ENCODE measurements at regions of chr5 and their contacts with region 1.

Region 1: DNA sequence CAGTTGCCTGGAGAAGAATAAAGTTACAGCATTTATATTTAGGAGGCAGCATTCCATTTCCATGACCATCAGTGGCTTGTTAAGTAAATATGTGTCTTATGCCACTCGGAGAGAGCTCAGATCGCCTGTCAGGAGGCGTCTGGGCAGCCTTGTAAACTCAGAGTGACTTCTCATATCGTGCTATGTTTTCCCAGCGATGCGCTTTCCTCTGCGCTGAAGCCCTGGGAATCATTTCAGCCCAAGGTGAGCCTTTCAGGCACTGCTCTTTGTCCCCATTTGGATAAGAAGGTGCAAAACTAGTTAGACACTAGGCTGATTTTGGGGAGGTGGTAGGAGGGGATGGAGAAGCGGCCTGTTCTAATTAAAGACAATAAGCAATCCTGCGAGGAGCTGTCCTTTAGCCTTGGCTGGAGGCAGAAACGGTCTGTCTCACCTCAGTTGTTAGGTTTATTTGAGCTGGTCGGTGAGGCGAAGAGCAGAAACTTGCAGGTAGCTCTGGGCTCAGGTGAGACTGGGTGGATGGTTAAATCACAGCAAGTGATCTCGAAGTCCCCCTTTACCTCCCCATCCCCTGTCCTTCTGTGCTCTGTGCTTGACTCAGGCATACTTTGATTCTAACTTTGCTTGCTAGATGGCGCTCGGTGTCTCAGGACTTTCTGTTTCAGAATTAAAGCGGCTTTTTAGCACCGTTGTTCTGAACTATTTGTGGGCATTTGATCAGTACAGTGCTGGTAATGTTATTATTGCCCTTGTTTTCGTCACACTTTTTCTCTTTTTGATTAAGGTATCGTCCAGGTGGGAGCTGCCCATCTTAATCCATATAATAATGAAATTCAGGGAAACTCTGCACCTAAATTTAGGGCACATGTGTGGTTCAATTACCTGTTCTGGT is 24.6 kb downstream of the NR2F1 start:
- DNase-seq: peak; percentile 79
- H3K4me3 Mint-ChIP-seq: no peak overlapping the region
- H3K27ac Mint-ChIP-seq: no peak overlapping the region
- H3K4me1 Mint-ChIP-seq: peaks cover 11% of the 10 kb centered on the region
- H3K27me3 Mint-ChIP-seq: peaks cover 88% of the 10 kb centered on the region

Region 2: GRCh38 chr5:93570294-93571113 is 37.1 kb before region 1 on chr5:
- intact Hi-C with region 1: loop called (anchors 5 kb)
- DNase-seq: peak; percentile 60
- H3K4me3 Mint-ChIP-seq: no peak overlapping the region
- H3K27ac Mint-ChIP-seq: no peak overlapping the region
- H3K4me1 Mint-ChIP-seq: peaks cover 3% of the 10 kb centered on the region
- H3K27me3 Mint-ChIP-seq: peaks cover 71% of the 10 kb centered on the region

Region 3: GRCh38 chr5:93582677-93583438 is 24.8 kb before region 1 on chr5 and contains the start of gene NR2F1:
- intact Hi-C with region 1: loop called (anchors 2 kb)
- DNase-seq: no peak
- H3K4me3 Mint-ChIP-seq: no peak within 1 kb of the TSS
- H3K27ac Mint-ChIP-seq: no peak within 1 kb of the TSS
- H3K4me1 Mint-ChIP-seq: peaks cover 18% of the 10 kb centered on the region
- H3K27me3 Mint-ChIP-seq: peaks cover 45% of the 10 kb centered on the region
- total RNA-seq, gene NR2F1: not detected in 2 replicates

Region 4: GRCh38 chr5:93620487-93621326 is 13.1 kb after region 1 on chr5:
- intact Hi-C with region 1: loop called (anchors 1 kb)
- DNase-seq: peak; percentile 81
- H3K4me3 Mint-ChIP-seq: peak overlapping the region; percentile 88
- H3K27ac Mint-ChIP-seq: peak overlapping the region; percentile 72
- H3K4me1 Mint-ChIP-seq: peaks cover 15% of the 10 kb centered on the region
- H3K27me3 Mint-ChIP-seq: peaks cover 52% of the 10 kb centered on the region

Region 5: GRCh38 chr5:93800988-93801811 is 193.6 kb after region 1 on chr5:
- intact Hi-C with region 1: loop called (anchors 1 kb)
- DNase-seq: peak; percentile 75
- H3K4me3 Mint-ChIP-seq: no peak overlapping the region
- H3K27ac Mint-ChIP-seq: no peak overlapping the region
- H3K4me1 Mint-ChIP-seq: peaks cover 3% of the 10 kb centered on the region
- H3K27me3 Mint-ChIP-seq: no peaks in the 10 kb centered on the region

Region 6: GRCh38 chr5:93819666-93820065 is 212.1 kb after region 1 on chr5:
- intact Hi-C with region 1: no loop called
- DNase-seq: no peak
- H3K4me3 Mint-ChIP-seq: no peak overlapping the region
- H3K27ac Mint-ChIP-seq: no peak overlapping the region
- H3K4me1 Mint-ChIP-seq: no peaks in the 10 kb centered on the region
- H3K27me3 Mint-ChIP-seq: no peaks in the 10 kb centered on the region

Region 7: GRCh38 chr5:93915142-93915553 is 307.5 kb after region 1 on chr5:
- intact Hi-C with region 1: loop called (anchors 2 kb)
- DNase-seq: no peak
- H3K4me3 Mint-ChIP-seq: no peak overlapping the region
- H3K27ac Mint-ChIP-seq: no peak overlapping the region
- H3K4me1 Mint-ChIP-seq: no peaks in the 10 kb centered on the region
- H3K27me3 Mint-ChIP-seq: no peaks in the 10 kb centered on the region

Region 8: DNA sequence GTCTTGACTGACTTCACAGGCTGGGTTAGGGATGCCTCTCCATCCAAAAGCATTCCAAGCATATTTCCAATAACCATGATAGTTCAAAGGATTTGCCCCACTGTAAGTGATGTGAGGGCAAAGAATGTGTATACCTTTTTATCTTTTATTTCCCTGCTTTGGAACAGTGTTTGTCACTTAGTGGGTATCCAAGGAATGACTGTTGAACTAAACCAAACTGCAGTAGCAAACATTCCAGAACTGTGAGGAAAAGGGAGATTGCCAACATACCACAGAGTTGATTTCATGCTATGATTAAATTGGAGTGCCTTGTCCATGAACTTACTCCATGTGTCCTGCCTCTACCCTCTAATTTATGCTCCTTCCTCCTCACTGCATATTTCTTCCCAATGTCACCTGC is 610.8 kb after region 1 on chr5:
- intact Hi-C with region 1: no loop called
- DNase-seq: no peak
- H3K4me3 Mint-ChIP-seq: no peak overlapping the region
- H3K27ac Mint-ChIP-seq: no peak overlapping the region
- H3K4me1 Mint-ChIP-seq: peaks cover 10% of the 10 kb centered on the region
- H3K27me3 Mint-ChIP-seq: no peaks in the 10 kb centered on the region